ENCODE measurements at regions of chr6 and their contacts with region 1.

Region 1: DNA sequence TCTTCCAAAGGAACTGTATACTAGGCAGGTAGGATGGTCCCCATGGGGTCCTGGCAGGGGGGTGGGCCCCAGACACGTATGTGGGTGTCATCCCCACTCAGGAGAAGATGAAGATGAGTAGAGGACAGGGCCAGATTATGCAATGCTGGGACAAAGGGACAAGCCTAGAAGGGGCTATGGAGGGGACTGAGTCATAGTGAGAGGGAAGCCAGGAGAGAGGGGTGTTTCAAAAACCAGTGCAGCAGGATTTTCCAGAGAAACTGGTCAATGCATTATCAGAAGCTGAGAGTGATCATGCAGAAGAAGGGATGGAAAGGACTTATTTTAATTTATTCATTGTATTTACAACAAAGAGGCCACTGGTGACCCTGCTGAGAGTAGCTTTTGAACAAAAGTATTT is 74.0 kb downstream of the PPP1R3G start:
- DNase-seq: no peak
- ATAC-seq: no peak

Region 2: GRCh38 chr6:5190507-5190906 is 31.4 kb after region 1 on chr6:
- intact Hi-C with region 1: loop called (anchors 5 kb)
- DNase-seq: no peak
- ATAC-seq: peak; percentile 70